Panc1 (cell line): ENCODE measurements at regions of chr11 and their contacts with region 1.

Region 1: DNA sequence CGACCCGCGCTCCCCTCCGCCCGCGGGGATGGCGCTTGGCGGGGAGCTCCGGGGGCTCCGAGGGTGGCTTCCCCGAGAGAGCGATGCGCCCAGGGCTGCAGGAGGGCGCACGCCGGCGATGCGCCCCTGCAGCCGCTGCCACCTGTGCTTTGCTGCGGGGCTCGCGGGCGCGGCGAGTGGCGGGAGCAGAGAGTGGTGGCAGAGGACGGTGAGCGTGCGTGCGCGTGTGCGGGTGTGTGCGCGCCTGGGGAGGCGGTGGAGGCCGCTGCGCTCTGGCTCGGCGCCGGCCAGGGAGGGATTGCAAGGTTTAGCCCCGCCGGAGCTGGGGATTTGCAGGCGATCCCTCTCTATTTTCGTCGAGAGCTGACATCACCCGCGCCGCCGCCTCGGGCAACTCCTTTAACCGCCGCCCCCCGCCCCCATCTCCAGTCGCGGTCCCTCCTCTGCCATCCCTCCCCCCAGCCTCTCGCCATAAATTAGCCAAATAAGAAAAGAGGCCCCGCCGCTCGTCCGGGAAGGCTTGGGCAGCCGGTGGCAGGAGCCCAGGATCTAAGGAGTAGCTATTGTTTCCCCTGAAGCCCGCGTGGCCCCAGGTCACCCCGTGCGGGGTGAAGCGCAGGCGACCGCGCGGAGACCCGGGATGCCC is at the start of gene SLC1A2:
- DNase-seq: no peak
- ATAC-seq: peak; percentile 65
- H3K4me3 ChIP-seq: peak within 1 kb of the TSS; percentile 41 to 52
- H3K27ac ChIP-seq: no peak within 1 kb of the TSS
- H3K4me1 ChIP-seq: peaks cover 10% of the 10 kb centered on the region; the same call in 1 of the 2 replicates
- H3K27me3 ChIP-seq: peaks cover 80% of the 10 kb centered on the region
- CTCF ChIP-seq: no peak
- total RNA-seq, gene SLC1A2: 0.21 TPM

Region 2: GRCh38 chr11:35260342-35260985 is 158.8 kb before region 1 on chr11:
- CTCF ChIA-PET with region 1: no interaction called
- POLR2A ChIA-PET with region 1: no interaction called
- in situ Hi-C with region 1: no loop called
- intact Hi-C with region 1: no loop called
- DNase-seq: no peak
- ATAC-seq: peak; percentile 70; the same call in 1 of the 2 replicates
- H3K4me3 ChIP-seq: 0 out of 4 replicates have a peak overlapping the region, but pooled peaks of 1 of the 2 experiments have one; percentile 9
- H3K27ac ChIP-seq: peak overlapping the region; percentile 1; the same call in 1 of the 2 replicates
- H3K4me1 ChIP-seq: 0 out of 2 replicates have a peak, but pooled peaks cover 7% of the 10 kb centered on the region
- H3K27me3 ChIP-seq: no peaks in the 10 kb centered on the region
- CTCF ChIP-seq: no peak

Region 3: GRCh38 chr11:35337136-35337918 is 82.0 kb before region 1 on chr11:
- CTCF ChIA-PET with region 1: no interaction called
- POLR2A ChIA-PET with region 1: no interaction called
- in situ Hi-C with region 1: no loop called
- intact Hi-C with region 1: no loop called
- DNase-seq: peak; percentile 94
- ATAC-seq: peak; percentile 95
- H3K4me3 ChIP-seq: no peak overlapping the region
- H3K27ac ChIP-seq: peak overlapping the region; percentile 77
- H3K4me1 ChIP-seq: peaks cover 19% of the 10 kb centered on the region
- H3K27me3 ChIP-seq: no peaks in the 10 kb centered on the region
- CTCF ChIP-seq: no peak

Region 4: GRCh38 chr11:35507688-35508087 is 88.4 kb after region 1 on chr11:
- CTCF ChIA-PET with region 1: no interaction called
- POLR2A ChIA-PET with region 1: interaction called, 10 read pairs
- in situ Hi-C with region 1: no loop called
- intact Hi-C with region 1: no loop called
- DNase-seq: no peak
- ATAC-seq: no peak
- H3K4me3 ChIP-seq: no peak overlapping the region
- H3K27ac ChIP-seq: no peak overlapping the region
- H3K4me1 ChIP-seq: no peaks in the 10 kb centered on the region
- H3K27me3 ChIP-seq: peaks cover 26% of the 10 kb centered on the region
- CTCF ChIP-seq: peak; percentile 21; the same call in 1 of the 2 replicates